Activated B cell treated with CpG ODN at 0.5 μM for 24 hours (primary cell): ENCODE measurements at regions of chr4 and their contacts with region 1.

Region 1: GRCh38 chr4:184649026-184649970 is at the starts of genes CASP3 and PRIMPOL:
- DNase-seq: peak; percentile 98
- ATAC-seq: peak; percentile 92
- H3K4me3 Mint-ChIP-seq: peak within 1 kb of the TSS; percentile 94
- H3K27ac Mint-ChIP-seq: peak within 1 kb of the TSS; percentile 89
- H3K4me1 Mint-ChIP-seq: peaks cover 43% of the 10 kb centered on the region
- H3K27me3 Mint-ChIP-seq: no peaks in the 10 kb centered on the region
- CTCF ChIP-seq: no peak
- total RNA-seq, gene CASP3: 24.0 and 24.9 TPM in 2 replicates
- total RNA-seq, gene PRIMPOL: 9.1 and 11.6 TPM in 2 replicates

Region 2: GRCh38 chr4:184282251-184282713 is 367.0 kb before region 1 on chr4:
- CTCF ChIA-PET with region 1: no interaction called
- POLR2A ChIA-PET with region 1: interaction called, 8 read pairs
- intact Hi-C with region 1: loop called (anchors 5 kb)
- DNase-seq: no peak
- ATAC-seq: peak; percentile 40
- H3K4me3 Mint-ChIP-seq: peak overlapping the region; percentile 32
- H3K27ac Mint-ChIP-seq: peak overlapping the region; percentile 83
- H3K4me1 Mint-ChIP-seq: peaks cover 66% of the 10 kb centered on the region
- H3K27me3 Mint-ChIP-seq: no peaks in the 10 kb centered on the region
- CTCF ChIP-seq: no peak

Region 3: GRCh38 chr4:184395971-184396391 is 253.3 kb before region 1 on chr4:
- CTCF ChIA-PET with region 1: no interaction called
- POLR2A ChIA-PET with region 1: no interaction called
- intact Hi-C with region 1: loop called (anchors 5 kb)
- DNase-seq: no peak
- ATAC-seq: peak; percentile 77
- H3K4me3 Mint-ChIP-seq: peak overlapping the region; percentile 81
- H3K27ac Mint-ChIP-seq: peak overlapping the region; percentile 95
- H3K4me1 Mint-ChIP-seq: peaks cover 46% of the 10 kb centered on the region
- H3K27me3 Mint-ChIP-seq: no peaks in the 10 kb centered on the region
- CTCF ChIP-seq: no peak

Region 4: DNA sequence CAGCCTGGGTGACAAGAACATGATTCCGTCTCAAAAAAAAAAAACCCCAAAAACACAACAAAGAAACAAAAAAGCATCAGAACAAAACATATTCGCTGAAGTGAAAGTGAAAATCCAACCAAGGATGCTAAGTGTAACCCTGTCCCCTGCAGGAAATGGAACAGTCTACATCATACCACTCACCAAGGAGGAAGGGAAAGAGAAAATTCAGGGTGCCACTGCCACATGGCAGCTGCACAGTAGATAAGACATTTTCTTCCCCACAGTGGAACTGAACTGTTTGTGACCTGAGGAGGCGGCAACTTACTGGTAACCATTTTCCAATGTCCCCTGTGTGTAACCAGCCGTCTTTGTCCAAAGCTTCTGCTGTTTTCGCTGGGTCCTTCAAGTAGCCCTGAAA is 112.8 kb after region 1 on chr4:
- CTCF ChIA-PET with region 1: no interaction called
- POLR2A ChIA-PET with region 1: no interaction called
- intact Hi-C with region 1: no loop called
- DNase-seq: no peak
- ATAC-seq: peak; percentile 47
- H3K4me3 Mint-ChIP-seq: no peak overlapping the region
- H3K27ac Mint-ChIP-seq: no peak overlapping the region
- H3K4me1 Mint-ChIP-seq: peaks cover 8% of the 10 kb centered on the region
- H3K27me3 Mint-ChIP-seq: no peaks in the 10 kb centered on the region
- CTCF ChIP-seq: no peak

Region 5: GRCh38 chr4:184825896-184826690 is 176.8 kb after region 1 on chr4 and contains the start of gene ACSL1:
- CTCF ChIA-PET with region 1: no interaction called
- POLR2A ChIA-PET with region 1: interaction called, 4 read pairs
- intact Hi-C with region 1: loop called (anchors 2 kb)
- DNase-seq: peak; percentile 77
- ATAC-seq: peak; percentile 78
- H3K4me3 Mint-ChIP-seq: peak within 1 kb of the TSS; percentile 94
- H3K27ac Mint-ChIP-seq: peak within 1 kb of the TSS; percentile 91
- H3K4me1 Mint-ChIP-seq: peaks cover 42% of the 10 kb centered on the region
- H3K27me3 Mint-ChIP-seq: no peaks in the 10 kb centered on the region
- CTCF ChIP-seq: no peak
- total RNA-seq, gene ACSL1: 46.3 and 47.0 TPM in 2 replicates

Region 6: DNA sequence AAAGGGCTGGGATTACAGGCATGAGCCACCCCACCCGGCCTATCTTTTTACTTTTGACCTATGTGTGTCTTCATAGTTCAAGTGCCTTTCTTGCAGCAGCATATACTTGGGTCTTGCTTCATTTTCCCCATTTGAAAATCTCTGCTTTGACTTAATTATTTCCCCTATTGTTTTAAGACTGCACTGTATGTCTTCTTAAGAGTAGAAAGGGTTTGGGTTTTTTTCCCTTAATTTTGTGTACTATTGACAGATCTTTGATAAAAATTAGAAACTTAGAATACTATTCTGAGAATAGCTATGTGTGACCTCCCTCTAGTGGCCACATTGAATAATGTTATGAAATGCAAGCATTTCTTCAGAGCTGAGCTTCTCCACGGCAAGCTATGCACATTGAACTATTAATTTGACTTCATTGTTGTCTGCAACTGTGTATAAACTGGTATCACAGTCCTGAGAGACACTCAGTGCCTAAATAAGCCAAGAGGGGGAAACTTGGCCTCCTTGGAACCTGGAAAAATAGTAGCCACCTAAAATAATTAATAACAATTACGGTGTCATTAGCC is 485.1 kb after region 1 on chr4:
- CTCF ChIA-PET with region 1: no interaction called
- POLR2A ChIA-PET with region 1: no interaction called
- intact Hi-C with region 1: loop called (anchors 2 kb)
- DNase-seq: no peak
- ATAC-seq: peak; percentile 56
- H3K4me3 Mint-ChIP-seq: no peak overlapping the region
- H3K27ac Mint-ChIP-seq: no peak overlapping the region
- H3K4me1 Mint-ChIP-seq: no peaks in the 10 kb centered on the region
- H3K27me3 Mint-ChIP-seq: peaks cover 9% of the 10 kb centered on the region
- CTCF ChIP-seq: no peak

Region 7: GRCh38 chr4:185597532-185598188 is 948.4 kb after region 1 on chr4:
- CTCF ChIA-PET with region 1: no interaction called
- POLR2A ChIA-PET with region 1: no interaction called
- intact Hi-C with region 1: loop called (anchors 10 kb)
- DNase-seq: peak; percentile 49
- ATAC-seq: peak; percentile 72
- H3K4me3 Mint-ChIP-seq: no peak overlapping the region
- H3K27ac Mint-ChIP-seq: no peak overlapping the region
- H3K4me1 Mint-ChIP-seq: no peaks in the 10 kb centered on the region
- H3K27me3 Mint-ChIP-seq: peaks cover 19% of the 10 kb centered on the region
- CTCF ChIP-seq: peak; percentile 100

Region 8: GRCh38 chr4:185761352-185762235 is 1112.3 kb after region 1 on chr4:
- CTCF ChIA-PET with region 1: no interaction called
- POLR2A ChIA-PET with region 1: no interaction called
- intact Hi-C with region 1: no loop called
- DNase-seq: no peak
- ATAC-seq: no peak
- H3K4me3 Mint-ChIP-seq: no peak overlapping the region
- H3K27ac Mint-ChIP-seq: no peak overlapping the region
- H3K4me1 Mint-ChIP-seq: no peaks in the 10 kb centered on the region
- H3K27me3 Mint-ChIP-seq: peaks cover 10% of the 10 kb centered on the region
- CTCF ChIP-seq: no peak